ENCODE measurements at regions of chr14 and their contacts with region 1.

Region 1: GRCh38 chr14:75577729-75578101 is 705 bp upstream of the FLVCR2 start:
- DNase-seq: peak; percentile 55
- H3K4me3 ChIP-seq: peak overlapping the region; percentile 66
- H3K27ac ChIP-seq: peak overlapping the region; percentile 22
- H3K27me3 ChIP-seq: peaks cover 7% of the 10 kb centered on the region
- CTCF ChIP-seq: peak; percentile 88

Region 2: DNA sequence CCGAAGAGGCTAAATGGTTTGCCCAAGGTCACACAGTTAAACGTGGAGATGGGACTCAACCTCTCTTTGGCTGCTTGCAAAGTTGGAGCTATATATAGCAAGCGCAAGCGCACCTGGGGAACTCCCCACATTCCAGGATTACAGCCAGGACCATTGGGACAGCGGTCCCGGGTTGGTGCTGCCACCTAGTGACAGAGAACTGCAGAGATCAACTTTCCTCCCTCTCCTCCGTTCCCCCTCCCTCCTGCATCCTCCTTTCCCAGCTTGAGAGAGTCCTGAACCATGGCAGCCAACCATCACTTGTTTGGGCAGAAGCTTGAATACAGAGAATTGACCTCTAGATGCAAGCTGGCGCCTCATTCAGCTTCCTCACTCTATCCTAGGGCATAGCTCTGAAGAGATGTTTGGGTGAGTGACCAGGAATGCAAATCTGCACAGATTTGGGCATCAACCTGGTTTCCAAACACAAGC is 16.7 kb before region 1 on chr14:
- CTCF ChIA-PET with region 1: interaction called, 25 read pairs
- POLR2A ChIA-PET with region 1: no interaction called
- DNase-seq: no peak
- H3K4me3 ChIP-seq: no peak overlapping the region
- H3K27ac ChIP-seq: no peak overlapping the region
- H3K27me3 ChIP-seq: peaks cover 13% of the 10 kb centered on the region
- CTCF ChIP-seq: peak; percentile 86

Region 3: DNA sequence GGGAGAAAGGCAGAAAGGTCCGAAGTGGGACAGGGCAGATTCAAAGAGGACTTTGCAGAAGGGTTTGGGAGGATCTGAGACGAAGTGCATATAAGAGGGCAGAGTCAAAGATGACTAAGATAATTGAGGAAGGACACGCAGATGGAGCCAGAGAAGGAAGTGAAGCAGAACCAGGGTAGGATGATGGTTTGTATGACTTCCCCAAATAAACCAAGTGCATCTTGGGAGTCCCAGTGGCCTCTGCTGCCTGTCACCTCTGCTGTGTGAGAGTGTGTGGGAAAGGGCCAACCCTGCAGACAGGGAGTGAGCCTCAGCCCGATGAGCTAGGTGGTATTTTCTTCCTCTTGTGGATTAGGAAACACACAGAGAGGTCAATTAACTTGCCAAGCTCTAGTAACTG is 37.5 kb after region 1 on chr14:
- CTCF ChIA-PET with region 1: interaction called, 10 read pairs
- POLR2A ChIA-PET with region 1: no interaction called
- DNase-seq: no peak
- H3K4me3 ChIP-seq: no peak overlapping the region
- H3K27ac ChIP-seq: no peak overlapping the region
- H3K27me3 ChIP-seq: peaks cover 13% of the 10 kb centered on the region
- CTCF ChIP-seq: no peak

Region 4: GRCh38 chr14:75647650-75648049 is 69.9 kb after region 1 on chr14:
- CTCF ChIA-PET with region 1: interaction called, 411 read pairs
- POLR2A ChIA-PET with region 1: interaction called, 3 read pairs
- DNase-seq: no peak
- H3K4me3 ChIP-seq: no peak overlapping the region
- H3K27ac ChIP-seq: no peak overlapping the region
- H3K27me3 ChIP-seq: no peaks in the 10 kb centered on the region
- CTCF ChIP-seq: no peak

Region 5: DNA sequence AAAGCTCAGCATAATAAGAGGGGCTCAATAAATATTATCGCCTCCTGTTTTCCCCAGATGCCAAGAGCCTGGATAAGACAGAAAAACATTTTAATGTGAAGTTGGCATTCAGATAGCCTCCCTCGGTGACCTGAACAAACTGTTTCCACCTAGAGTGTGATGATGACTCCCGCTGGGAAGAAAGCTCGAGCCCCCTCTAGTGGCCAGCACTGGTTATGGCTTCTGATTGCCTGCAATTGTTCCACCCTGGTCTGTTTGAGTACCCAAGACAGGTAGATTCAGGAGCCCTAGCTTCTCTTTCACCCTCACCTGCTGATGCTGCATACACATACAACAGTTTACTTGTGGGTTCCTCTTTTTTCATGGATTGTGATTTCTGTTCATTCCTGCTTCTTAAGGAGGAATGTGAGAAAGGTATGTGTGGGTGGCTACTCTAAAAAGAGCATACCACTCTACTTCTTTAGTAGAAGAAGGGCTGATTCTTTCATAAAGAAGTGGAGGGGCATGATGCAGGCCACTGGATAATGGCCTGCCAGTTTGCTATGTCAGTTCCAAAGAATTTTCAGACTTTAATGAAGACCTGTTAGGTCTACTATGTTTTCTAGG is 76.5 kb after region 1 on chr14:
- CTCF ChIA-PET with region 1: interaction called, 411 read pairs
- POLR2A ChIA-PET with region 1: interaction called, 4 read pairs
- DNase-seq: no peak
- H3K4me3 ChIP-seq: no peak overlapping the region
- H3K27ac ChIP-seq: no peak overlapping the region
- H3K27me3 ChIP-seq: no peaks in the 10 kb centered on the region
- CTCF ChIP-seq: peak; percentile 99

Region 6: GRCh38 chr14:75660630-75661494 is 83.1 kb after region 1 on chr14 and contains the starts of genes ERG28 and TTLL5:
- CTCF ChIA-PET with region 1: interaction called, 411 read pairs
- POLR2A ChIA-PET with region 1: interaction called, 3 read pairs
- DNase-seq: peak; percentile 94
- H3K4me3 ChIP-seq: peak within 1 kb of the TSS; percentile 95
- H3K27ac ChIP-seq: peak within 1 kb of the TSS; percentile 58
- H3K27me3 ChIP-seq: no peaks in the 10 kb centered on the region
- CTCF ChIP-seq: no peak
- polyA plus RNA-seq, gene ERG28: 22.8 and 24.7 TPM in 2 replicates
- polyA plus RNA-seq, gene TTLL5: 21.6 and 24.1 TPM in 2 replicates

Measured in AG04450 (cell line).